Mammary epithelial cell (primary cell): ENCODE measurements at regions of chr5 and their contacts with region 1.

Region 1: DNA sequence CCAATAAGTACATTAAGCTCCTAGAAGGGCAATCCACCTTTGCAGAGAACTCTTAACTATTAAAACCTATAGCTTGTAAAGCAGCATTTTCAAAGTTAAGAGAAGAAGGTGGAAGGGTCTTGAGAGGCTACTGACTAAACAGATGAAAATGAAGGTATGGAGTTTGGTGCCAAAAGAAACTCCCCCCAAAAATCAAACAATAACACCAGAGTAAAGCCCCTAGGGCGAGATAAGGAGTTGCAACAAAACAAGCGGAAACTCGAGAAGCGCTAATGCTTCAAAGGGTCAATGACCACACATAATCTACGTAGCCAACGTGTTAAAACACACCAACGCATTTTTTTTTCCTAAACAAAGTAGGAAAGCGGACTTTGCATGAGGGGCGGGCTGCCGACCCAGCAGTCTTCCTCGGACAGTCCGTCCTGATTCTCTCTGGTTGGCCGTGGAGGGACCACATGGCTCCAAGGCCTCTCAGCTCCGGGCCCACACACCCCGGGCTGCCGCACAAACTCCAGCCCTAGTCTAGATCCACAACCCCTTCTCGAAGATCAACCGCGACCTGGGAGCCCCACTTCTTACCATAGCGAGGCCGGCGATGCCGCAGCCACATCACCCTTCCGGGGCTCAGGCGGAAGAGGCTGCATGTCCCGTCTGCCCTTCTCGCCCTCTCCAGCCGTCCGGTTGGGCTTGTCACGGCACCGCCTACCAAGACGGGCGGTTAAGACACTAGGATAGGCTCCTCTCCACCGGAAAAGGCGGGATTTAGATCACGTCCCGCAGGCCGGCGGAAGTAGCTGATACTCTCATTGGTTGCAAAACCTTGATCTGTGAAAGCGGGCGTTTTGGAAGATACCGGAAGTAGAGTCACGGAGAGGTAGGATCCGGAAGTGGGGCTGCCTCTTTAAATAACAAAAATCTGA is at the starts of genes TMEM167A and XRCC4:
- DNase-seq: peak; percentile 98
- H3K4me3 ChIP-seq: peak within 1 kb of the TSS; percentile 75 to 91 (median 86)
- H3K27ac ChIP-seq: peak within 1 kb of the TSS; percentile 87
- H3K4me1 ChIP-seq: peaks cover 8% of the 10 kb centered on the region
- H3K27me3 ChIP-seq: no peaks in the 10 kb centered on the region
- CTCF ChIP-seq: no peak
- total RNA-seq, gene TMEM167A: 49.8 to 88.5 TPM
- total RNA-seq, gene XRCC4: 6.3 to 8.3 TPM

Region 2: GRCh38 chr5:83255268-83255667 is 178.3 kb after region 1 on chr5:
- CTCF ChIA-PET with region 1: no interaction called
- dilution Hi-C with region 1: no loop called
- in situ Hi-C with region 1: no loop called
- intact Hi-C with region 1: loop called (anchors 10 kb)
- DNase-seq: peak; percentile 40
- H3K4me3 ChIP-seq: no peak overlapping the region
- H3K27ac ChIP-seq: no peak overlapping the region
- H3K4me1 ChIP-seq: peaks cover 18% of the 10 kb centered on the region
- H3K27me3 ChIP-seq: no peaks in the 10 kb centered on the region
- CTCF ChIP-seq: no peak

Region 3: DNA sequence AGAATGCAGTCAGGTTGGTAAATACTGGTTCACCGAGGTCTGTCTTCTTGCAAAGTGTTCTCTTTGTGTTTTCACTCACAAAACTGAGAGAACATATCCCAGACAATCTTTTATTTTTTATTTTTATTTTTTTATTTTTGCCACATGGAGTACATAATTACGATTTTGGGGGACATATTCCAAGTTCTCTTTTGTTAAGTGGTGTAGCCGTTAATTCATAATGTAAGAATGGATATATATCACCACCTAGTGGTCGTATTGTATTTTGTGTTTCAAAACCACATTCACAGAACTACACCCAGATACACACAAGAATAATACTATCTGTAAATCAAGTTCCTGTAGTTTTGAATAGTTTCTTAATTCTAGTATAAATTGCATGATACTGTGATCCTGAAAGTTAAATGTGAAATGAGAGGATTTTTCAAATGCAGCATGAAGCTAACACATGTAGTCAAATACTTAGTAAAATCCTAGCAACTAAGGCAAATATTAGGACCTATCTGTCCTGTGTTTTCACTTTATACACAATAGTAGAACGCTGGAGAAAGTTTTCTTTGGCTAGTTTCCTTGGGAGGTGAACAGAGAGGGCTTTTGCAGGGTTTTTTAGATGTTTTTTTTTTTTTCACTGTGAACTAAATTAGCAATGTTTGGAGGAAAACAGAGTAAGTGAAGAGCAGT is 487.2 kb after region 1 on chr5:
- CTCF ChIA-PET with region 1: no interaction called
- dilution Hi-C with region 1: no loop called
- in situ Hi-C with region 1: no loop called
- intact Hi-C with region 1: loop called (anchors 5 kb)
- DNase-seq: peak; percentile 21
- H3K4me3 ChIP-seq: no peak overlapping the region
- H3K27ac ChIP-seq: no peak overlapping the region
- H3K4me1 ChIP-seq: peaks cover 12% of the 10 kb centered on the region
- H3K27me3 ChIP-seq: no peaks in the 10 kb centered on the region
- CTCF ChIP-seq: peak; percentile 40 to 51